Sciatic nerve (tissue), 2 donors: ENCODE measurements at regions of chr11 and their contacts with region 1.

Region 1: DNA sequence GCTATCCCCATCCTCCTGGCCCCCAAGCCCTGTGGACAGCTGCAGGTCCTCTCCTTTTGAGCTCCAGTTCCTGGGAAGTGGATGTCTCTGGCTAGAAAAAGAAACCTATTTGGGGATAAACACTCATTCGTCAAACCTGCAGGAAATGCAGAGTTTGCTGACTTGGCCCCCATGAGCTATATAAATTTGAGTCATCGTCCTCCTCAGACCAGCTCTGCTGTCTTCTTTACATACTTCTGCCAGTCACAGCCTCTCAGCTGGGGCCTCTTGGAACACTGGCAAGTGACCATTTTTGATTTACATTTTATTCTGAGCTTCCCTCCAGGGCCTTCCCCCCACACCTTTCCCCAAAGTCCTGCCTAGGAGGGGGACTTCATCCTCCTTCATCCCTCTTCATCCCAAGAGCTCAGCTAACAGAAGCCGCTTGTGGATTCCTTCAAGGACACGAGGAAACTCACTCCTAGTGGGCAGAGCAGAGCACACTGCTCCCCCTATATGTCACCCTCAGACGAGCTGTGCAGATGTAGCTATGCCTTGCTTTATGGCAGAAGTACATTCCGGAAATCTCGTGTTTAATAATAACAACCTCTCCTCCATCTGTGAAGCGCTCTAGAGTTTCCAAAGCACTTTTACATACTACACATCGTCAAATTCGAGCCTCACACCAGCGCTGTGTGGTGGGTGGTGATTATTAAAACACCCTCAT is 131.8 kb downstream of the FEZ1 start:
- DNase-seq: no peak
- ATAC-seq: no peak

Region 2: DNA sequence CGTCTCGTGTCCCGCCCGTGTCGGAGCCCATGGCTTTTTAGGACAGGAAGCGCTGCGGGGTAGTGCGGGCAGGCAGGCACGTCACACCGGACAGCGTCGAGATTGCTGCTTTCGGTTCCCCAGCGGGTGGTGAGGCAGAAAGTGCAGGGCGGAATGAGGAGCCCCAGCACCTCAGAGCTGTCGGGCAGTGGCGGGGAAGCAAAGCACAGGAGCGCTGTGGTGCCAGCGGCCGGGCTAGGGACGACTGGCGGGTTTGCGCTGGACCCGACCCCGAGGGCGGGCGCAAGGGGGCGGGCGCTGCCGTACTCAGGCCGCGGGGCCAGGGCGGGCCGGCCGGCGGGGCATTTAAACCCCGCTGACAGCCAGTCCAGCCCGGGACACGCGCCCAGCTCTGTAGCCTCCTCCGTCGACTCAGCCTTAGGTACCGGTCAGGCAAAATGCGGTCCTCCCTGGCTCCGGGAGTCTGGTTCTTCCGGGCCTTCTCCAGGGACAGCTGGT is 301.3 kb before region 1 on chr11 and contains the start of gene SLC37A2:
- intact Hi-C with region 1: no loop called
- DNase-seq: peak; percentile 76
- ATAC-seq: peak; percentile 95
- total RNA-seq, gene SLC37A2: 12.7 TPM

Region 3: DNA sequence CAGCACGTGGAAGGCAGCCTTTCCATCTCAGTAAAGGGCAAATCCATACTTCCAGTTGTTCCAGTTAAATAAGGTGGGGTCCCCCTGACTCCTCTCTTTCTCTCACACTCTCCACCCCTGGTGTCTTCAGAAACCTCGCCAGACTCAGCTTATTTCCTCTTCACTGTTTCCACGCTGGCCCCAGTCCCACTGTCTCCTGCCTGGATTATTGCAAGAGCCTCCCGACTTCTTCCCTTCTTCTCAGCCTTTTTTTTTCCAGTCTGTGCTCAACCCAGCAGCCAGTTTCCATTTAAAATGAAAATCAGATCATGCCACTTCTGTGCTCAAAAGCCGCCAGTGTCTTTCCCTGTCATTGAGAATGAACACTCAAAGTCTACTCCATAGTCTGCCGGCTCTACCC is 68.3 kb before region 1 on chr11:
- intact Hi-C with region 1: loop called (anchors 2 kb)
- DNase-seq: no peak
- ATAC-seq: peak; percentile 33